ENCODE measurements at regions of chr9 and their contacts with region 1.

Region 1: GRCh38 chr9:6692881-6693361 is 47.4 kb upstream of the GLDC start:
- DNase-seq: no peak

Region 2: GRCh38 chr9:6566409-6567139 is 126.3 kb before region 1 on chr9:
- intact Hi-C with region 1: no loop called
- DNase-seq: no peak

Region 3: DNA sequence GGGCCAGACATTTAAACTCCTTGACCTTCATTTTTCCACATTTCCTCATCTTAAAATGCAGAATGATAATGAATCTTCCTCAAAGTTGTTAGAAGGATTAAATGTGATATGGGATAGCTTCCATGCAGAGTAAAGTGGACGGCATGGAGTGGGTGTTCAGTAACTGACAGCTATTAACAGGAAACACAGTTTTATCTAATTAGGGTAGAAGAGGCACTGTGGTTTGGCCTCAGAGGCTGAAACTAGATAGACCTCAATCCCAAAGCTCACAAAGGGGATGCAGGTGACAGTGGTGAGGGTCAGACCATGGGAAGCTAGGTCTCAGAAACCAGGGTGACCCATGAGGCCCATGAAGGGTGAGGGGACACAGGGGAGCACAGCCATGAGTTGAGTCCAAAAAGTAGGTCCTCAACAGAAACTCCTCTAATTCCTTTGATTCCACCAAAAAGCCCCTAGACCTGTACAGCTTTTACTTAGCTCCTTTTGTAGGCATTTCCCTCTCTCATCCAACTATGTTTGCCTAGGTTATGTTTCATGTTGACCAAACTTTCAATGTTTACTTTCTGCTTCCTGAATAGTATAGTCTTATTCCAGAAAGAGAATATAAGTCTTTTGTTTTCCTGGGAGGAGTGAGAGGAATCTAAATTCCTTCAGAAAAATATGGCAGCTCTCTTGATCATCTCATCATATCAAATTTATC is 19.4 kb before region 1 on chr9:
- intact Hi-C with region 1: loop called (anchors 2 kb)
- DNase-seq: no peak

Region 4: GRCh38 chr9:6777213-6777902 is 84.4 kb after region 1 on chr9:
- intact Hi-C with region 1: no loop called
- DNase-seq: no peak